ENCODE measurements at regions of chr2 and their contacts with region 1.

Region 1: GRCh38 chr2:37231241-37232130 is at the starts of genes CEBPZ and NDUFAF7:
- DNase-seq: peak; percentile 93
- ATAC-seq: peak; percentile 98
- H3K4me3 ChIP-seq: peak within 1 kb of the TSS; percentile 84 to 99 (median 95)
- H3K27ac ChIP-seq: peak within 1 kb of the TSS; percentile 76
- H3K4me1 ChIP-seq: peaks cover 51% of the 10 kb centered on the region
- H3K27me3 ChIP-seq: no peaks in the 10 kb centered on the region; a peak in 1 of 5 replicates
- CTCF ChIP-seq: no peak; the same call in 1 of the 2 replicates
- EP300 ChIP-seq: peak; percentile 31 to 73
- POLR2A ChIP-seq: peak; percentile 97
- RAD21 ChIP-seq: peak; percentile 6
- total RNA-seq, gene CEBPZ: 117 and 182 TPM in 2 replicates
- total RNA-seq, gene NDUFAF7: 39.4 and 40.8 TPM in 2 replicates

Region 2: GRCh38 chr2:37083873-37084794 is 147.4 kb before region 1 on chr2 and contains the starts of genes GPATCH11 and HEATR5B:
- CTCF ChIA-PET with region 1: no interaction called
- POLR2A ChIA-PET with region 1: no interaction called
- in situ Hi-C with region 1: no loop called
- intact Hi-C with region 1: loop called (anchors 10 kb)
- DNase-seq: peak; percentile 98
- ATAC-seq: peak; percentile 97
- H3K4me3 ChIP-seq: peak within 1 kb of the TSS; percentile 80 to 94 (median 90)
- H3K27ac ChIP-seq: peak within 1 kb of the TSS; percentile 77
- H3K4me1 ChIP-seq: peaks cover 34% of the 10 kb centered on the region
- H3K27me3 ChIP-seq: no peaks in the 10 kb centered on the region; a peak in 1 of 5 replicates
- CTCF ChIP-seq: no peak
- EP300 ChIP-seq: peak in 1 of 2 experiments; percentile 16; a peak in 1 of 4 replicates
- POLR2A ChIP-seq: peak; percentile 79 to 91
- RAD21 ChIP-seq: peak; percentile 11; the same call in 1 of the 2 replicates
- total RNA-seq, gene GPATCH11: 8.7 and 13.3 TPM in 2 replicates
- total RNA-seq, gene HEATR5B: 16.3 and 17.6 TPM in 2 replicates

Region 3: DNA sequence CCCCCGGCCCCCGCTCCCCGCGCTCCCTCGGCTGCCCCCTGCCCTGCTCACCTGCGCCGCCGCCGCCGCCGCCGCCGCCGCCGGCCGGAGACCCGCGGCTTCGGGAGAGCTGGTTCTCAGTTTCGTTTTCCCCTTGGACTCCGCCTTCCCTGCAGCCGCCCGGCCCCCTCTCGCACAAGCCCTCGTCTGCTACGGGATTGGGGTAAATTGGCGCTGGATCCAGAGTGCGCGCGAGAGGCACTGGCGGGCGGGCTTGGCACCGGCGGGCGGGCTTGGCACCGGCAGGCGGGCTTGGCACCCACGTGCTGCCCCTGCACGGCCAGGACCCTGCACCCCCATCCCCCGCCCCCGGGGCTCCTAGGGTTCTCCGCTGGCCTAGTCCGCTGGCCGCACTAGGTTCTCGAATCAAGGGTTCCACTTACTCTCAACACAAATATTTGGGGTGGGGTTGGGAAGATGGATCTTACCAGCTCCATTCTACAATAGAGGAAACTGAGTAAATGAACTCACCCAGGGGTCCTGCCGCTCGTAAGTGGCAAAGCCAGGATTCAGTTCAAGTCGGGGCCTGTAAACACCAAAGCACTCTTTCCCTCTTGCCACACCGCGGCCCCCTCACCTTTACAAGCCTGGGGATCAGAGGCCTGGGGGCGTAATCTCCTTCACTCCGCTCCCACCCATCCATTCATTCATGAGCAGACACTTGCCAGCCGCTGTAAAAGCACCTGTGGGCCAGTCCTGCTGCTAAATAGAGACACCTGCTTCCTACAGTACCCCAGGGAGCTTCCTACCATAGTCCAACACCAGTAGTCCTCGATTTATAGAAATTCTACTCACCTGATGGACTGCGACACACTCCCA is 74.4 kb before region 1 on chr2 and contains the start of gene EIF2AK2:
- CTCF ChIA-PET with region 1: no interaction called
- POLR2A ChIA-PET with region 1: interaction called, 12 read pairs
- in situ Hi-C with region 1: loop called (anchors 5 kb)
- intact Hi-C with region 1: no loop called
- DNase-seq: peak; percentile 84
- ATAC-seq: peak; percentile 97
- H3K4me3 ChIP-seq: peak within 1 kb of the TSS; percentile 89 to 98 (median 94)
- H3K27ac ChIP-seq: peak within 1 kb of the TSS; percentile 74
- H3K4me1 ChIP-seq: peaks cover 61% of the 10 kb centered on the region
- H3K27me3 ChIP-seq: no peaks in the 10 kb centered on the region; a peak in 1 of 5 replicates
- CTCF ChIP-seq: peak; percentile 5; the same call in 1 of the 2 replicates
- EP300 ChIP-seq: 0 out of 4 replicates have a peak, but pooled peaks of 1 of the 2 experiments have one; percentile 36
- POLR2A ChIP-seq: peak; percentile 43 to 75; a peak in 3 of 4 replicates
- RAD21 ChIP-seq: no peak
- total RNA-seq, gene EIF2AK2: 26.1 and 42.8 TPM in 2 replicates

Region 4: DNA sequence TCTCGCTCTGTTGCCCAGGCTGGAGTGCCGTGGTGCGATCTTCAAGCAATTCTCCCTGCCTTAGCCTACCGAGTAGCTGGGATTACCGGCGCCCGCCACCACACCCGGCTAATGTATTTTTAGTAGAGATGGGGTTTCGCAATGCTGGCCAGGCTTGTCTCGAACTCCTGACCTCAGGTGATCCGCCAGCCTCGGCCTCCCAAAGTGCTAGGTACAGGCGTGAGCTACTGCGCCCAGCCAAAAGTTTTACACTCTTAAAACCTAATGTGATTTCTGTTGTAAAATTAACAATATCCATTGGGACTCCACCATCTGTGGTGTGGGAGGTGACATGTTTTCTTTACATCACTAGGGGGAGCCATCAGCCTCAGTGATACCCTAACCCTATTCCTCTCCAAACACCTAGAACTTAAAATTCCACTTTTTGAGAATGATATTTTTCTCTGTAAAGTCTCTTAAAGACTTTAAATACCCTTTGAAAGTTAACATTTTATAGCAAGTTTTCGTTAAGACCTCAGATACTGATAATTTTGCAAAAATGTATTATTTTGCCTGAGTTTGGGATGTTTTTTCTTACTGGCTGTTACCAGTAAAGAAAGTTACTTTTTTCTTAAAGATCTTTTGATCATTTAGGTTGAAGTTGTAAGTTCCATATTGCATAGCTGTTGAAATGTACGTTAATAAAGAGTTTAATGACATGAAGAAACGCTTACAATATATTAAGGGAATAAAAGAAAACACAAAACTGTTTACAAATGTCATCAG is 63.1 kb before region 1 on chr2:
- CTCF ChIA-PET with region 1: no interaction called
- POLR2A ChIA-PET with region 1: interaction called, 3 read pairs
- in situ Hi-C with region 1: no loop called
- intact Hi-C with region 1: loop called (anchors 1 kb)
- DNase-seq: peak; percentile 55
- ATAC-seq: peak; percentile 93
- H3K4me3 ChIP-seq: peak overlapping the region in 1 of 3 experiments; percentile 35; a peak in 1 of 6 replicates
- H3K27ac ChIP-seq: no peak overlapping the region
- H3K4me1 ChIP-seq: peaks cover 21% of the 10 kb centered on the region
- H3K27me3 ChIP-seq: peaks cover 0 to 4% of the 10 kb centered on the region in 2 experiments; a peak in 1 of 5 replicates
- CTCF ChIP-seq: peak; percentile 82
- EP300 ChIP-seq: no peak
- POLR2A ChIP-seq: no peak
- RAD21 ChIP-seq: peak; percentile 74

Region 5: GRCh38 chr2:37196320-37197195 is 34.9 kb before region 1 on chr2 and contains the start of gene CEBPZOS:
- CTCF ChIA-PET with region 1: no interaction called
- POLR2A ChIA-PET with region 1: interaction called, 14 read pairs
- in situ Hi-C with region 1: no loop called
- intact Hi-C with region 1: loop called (anchors 2 kb)
- DNase-seq: peak; percentile 80
- ATAC-seq: peak; percentile 87
- H3K4me3 ChIP-seq: peak within 1 kb of the TSS; percentile 78 to 91 (median 90)
- H3K27ac ChIP-seq: peak within 1 kb of the TSS; percentile 70
- H3K4me1 ChIP-seq: peaks cover 34% of the 10 kb centered on the region
- H3K27me3 ChIP-seq: peaks cover 2 to 3% of the 10 kb centered on the region in 2 experiments; a peak in 1 of 5 replicates
- CTCF ChIP-seq: peak; percentile 3; the same call in 1 of the 2 replicates
- EP300 ChIP-seq: no peak; a peak in 1 of 4 replicates
- POLR2A ChIP-seq: peak; percentile 85 to 98
- RAD21 ChIP-seq: peak; percentile 47; the same call in 1 of the 2 replicates
- total RNA-seq, gene CEBPZOS: 18.6 and 25.6 TPM in 2 replicates

Region 6: DNA sequence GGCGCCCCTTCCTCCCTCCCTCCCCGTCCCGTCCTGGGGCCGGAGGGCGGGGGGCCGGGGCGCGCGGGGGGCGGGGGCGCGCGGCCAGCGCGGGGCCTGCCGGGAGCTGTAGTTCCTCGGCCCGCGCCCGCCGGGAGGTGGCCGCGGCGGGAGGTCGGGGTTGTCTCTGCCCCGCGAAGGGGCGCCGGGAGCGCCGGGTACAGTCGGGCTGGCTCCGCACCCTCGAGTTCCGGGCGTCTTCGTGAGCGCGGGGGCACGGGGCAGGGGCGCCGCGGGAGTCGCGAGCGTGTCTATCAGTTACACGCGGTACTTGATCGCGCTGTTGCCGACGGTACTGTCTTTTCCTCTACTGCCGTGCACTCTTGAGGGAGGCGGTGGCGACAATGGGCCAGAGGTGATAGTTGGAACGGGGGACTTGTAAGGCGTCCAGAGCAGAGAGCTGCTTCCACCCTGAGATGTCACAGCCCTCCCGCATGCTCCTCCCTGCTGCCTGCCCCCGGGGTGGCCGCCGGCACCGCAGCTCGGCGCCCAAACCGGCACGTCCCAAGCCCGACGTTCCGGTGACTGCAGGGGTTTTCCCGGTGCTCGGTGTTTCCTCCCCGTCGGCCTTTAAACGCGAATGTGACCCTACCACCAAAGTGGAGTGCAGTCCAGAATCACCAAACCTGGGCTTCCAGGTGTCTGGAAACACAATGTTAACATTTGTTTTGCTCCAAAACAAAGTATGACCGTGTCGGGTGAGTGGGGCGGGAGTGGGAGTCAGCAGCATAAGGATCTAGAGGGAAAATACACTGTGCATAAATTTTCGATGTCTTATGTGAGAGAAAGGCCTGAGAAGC is 93.5 kb after region 1 on chr2 and contains the start of gene PRKD3:
- CTCF ChIA-PET with region 1: no interaction called
- POLR2A ChIA-PET with region 1: interaction called, 8 read pairs
- in situ Hi-C with region 1: no loop called
- intact Hi-C with region 1: loop called (anchors 1 kb)
- DNase-seq: peak; percentile 27
- ATAC-seq: peak; percentile 90
- H3K4me3 ChIP-seq: peak within 1 kb of the TSS; percentile 85 to 98 (median 90)
- H3K27ac ChIP-seq: peak within 1 kb of the TSS; percentile 63
- H3K4me1 ChIP-seq: peaks cover 32% of the 10 kb centered on the region
- H3K27me3 ChIP-seq: peaks cover 3 to 20% of the 10 kb centered on the region in 2 experiments; a peak in 4 of 5 replicates
- CTCF ChIP-seq: no peak
- EP300 ChIP-seq: no peak
- POLR2A ChIP-seq: no peak
- RAD21 ChIP-seq: no peak
- total RNA-seq, gene PRKD3: 38.4 and 58.2 TPM in 2 replicates

Region 7: GRCh38 chr2:37795938-37796337 is 564.5 kb after region 1 on chr2:
- CTCF ChIA-PET with region 1: no interaction called
- POLR2A ChIA-PET with region 1: no interaction called
- in situ Hi-C with region 1: no loop called
- intact Hi-C with region 1: no loop called
- DNase-seq: no peak
- ATAC-seq: no peak
- H3K4me3 ChIP-seq: no peak overlapping the region
- H3K27ac ChIP-seq: no peak overlapping the region
- H3K4me1 ChIP-seq: no peaks in the 10 kb centered on the region
- H3K27me3 ChIP-seq: no peaks in the 10 kb centered on the region
- CTCF ChIP-seq: no peak
- EP300 ChIP-seq: no peak
- POLR2A ChIP-seq: no peak
- RAD21 ChIP-seq: no peak

Measured in HepG2 (cell line).